AG04449 (cell line): ENCODE measurements at regions of chr1 and their contacts with region 1.

Region 1: GRCh38 chr1:168439456-168440375 is 104.1 kb downstream of the XCL2 start:
- DNase-seq: peak; percentile 52
- H3K4me3 ChIP-seq: peak overlapping the region; percentile 42
- CTCF ChIP-seq: peak; percentile 79

Region 2: DNA sequence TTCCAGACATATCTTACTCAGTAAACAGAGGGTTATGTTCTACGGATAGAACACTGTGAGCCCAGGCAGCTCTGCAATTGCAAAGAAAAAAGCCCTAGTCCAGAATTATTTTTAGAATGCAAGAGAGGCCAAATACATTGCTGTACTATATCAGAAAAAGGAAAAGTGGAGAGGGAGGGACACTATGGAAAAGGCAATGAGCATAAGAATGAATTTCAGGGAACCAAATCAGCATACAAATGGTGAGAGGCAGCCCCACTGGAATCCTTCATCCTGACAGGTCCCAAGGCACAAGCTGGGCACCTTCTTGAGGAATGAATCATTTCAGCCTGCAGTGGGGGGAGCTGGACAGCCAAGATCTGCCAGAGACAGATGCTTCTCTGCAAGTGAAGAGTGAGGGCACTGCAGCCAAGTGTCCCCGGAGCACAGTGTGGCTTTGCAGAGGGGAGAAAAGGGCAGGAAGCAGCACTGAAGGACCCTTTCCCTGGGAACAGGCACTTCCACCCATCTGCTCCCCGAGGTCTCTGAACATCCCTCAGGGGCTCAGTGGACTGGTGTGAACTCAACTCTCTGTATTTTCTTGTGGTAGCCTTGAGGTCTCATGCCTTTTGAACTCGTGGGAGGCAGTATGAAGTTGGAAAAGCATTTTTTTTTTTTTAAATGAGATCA is 11.5 kb before region 1 on chr1:
- CTCF ChIA-PET with region 1: interaction called, 29 read pairs
- POLR2A ChIA-PET with region 1: no interaction called
- DNase-seq: no peak
- H3K4me3 ChIP-seq: no peak overlapping the region
- CTCF ChIP-seq: no peak

Region 3: GRCh38 chr1:168454211-168454815 is 14.6 kb after region 1 on chr1:
- CTCF ChIA-PET with region 1: interaction called, 21 read pairs
- POLR2A ChIA-PET with region 1: no interaction called
- DNase-seq: no peak
- H3K4me3 ChIP-seq: no peak overlapping the region
- CTCF ChIP-seq: no peak

Region 4: GRCh38 chr1:168466092-168466713 is 26.5 kb after region 1 on chr1:
- CTCF ChIA-PET with region 1: interaction called, 24 read pairs
- POLR2A ChIA-PET with region 1: no interaction called
- DNase-seq: no peak
- H3K4me3 ChIP-seq: no peak overlapping the region
- CTCF ChIP-seq: no peak

Region 5: DNA sequence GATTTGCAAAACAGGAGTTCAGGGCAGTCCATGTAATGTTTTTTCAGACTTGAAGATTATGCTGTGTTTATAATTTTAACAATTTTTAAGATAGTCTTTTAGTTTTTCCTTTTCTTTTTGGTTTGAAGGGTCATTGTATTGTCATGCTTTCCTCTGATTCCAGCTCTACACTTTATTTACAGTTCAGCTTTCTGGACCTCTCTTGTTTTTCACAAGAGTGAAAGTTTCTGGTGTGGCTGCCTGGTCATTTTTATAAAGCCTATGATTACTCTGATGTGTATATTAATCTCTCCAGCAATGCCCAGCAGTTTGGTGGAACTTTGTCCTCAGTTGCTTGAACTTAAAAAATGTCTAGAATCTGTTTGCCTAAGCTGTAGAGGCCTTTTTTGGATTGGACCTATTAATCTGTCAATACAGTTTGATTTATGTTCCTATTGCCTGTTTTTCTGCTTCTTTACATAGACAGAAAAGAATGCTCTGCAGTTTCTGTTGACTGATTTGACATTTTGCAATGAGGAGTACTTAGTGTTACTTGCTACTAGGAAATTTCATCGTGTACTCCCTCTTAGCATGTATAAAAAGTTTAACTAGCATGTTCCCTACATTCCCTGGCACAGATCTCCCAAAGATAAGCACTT is 51.9 kb after region 1 on chr1:
- CTCF ChIA-PET with region 1: no interaction called
- POLR2A ChIA-PET with region 1: no interaction called
- DNase-seq: no peak
- H3K4me3 ChIP-seq: no peak overlapping the region
- CTCF ChIP-seq: no peak

Region 6: DNA sequence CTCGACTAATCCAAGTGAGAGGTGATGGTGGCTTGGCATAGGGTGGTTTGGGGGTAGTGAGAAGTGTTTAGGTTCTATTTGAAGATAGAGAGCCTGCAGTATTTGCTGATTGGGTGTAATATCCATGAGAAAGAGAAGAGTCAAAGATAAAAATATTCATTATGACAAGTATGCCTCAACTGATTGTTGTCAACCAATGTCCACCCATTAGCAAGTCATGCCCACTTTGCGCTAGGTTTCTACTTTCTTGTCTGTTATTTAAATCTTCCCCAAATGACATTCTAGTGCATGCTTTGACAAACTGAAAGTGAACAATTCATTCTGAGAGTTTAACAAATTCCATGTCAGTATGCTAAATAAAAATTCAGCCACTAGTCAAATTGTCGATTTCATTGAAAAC is 132.9 kb after region 1 on chr1:
- CTCF ChIA-PET with region 1: interaction called, 28 read pairs
- POLR2A ChIA-PET with region 1: no interaction called
- DNase-seq: no peak
- H3K4me3 ChIP-seq: no peak overlapping the region
- CTCF ChIP-seq: no peak